Adrenal gland (tissue), 19 donors: ENCODE measurements at regions of chr2 and their contacts with region 1.

Region 1: GRCh38 chr2:66587216-66587615 is 152.3 kb downstream of the MEIS1 start:
- DNase-seq: peak in 1 of 7 donors; percentile 27
- H3K4me3 ChIP-seq: no peak overlapping the region
- H3K27ac ChIP-seq: peak overlapping the region in 1 of 5 donors; percentile 24
- H3K4me1 ChIP-seq: no peaks in the 10 kb centered on the region
- H3K27me3 ChIP-seq: no peaks in the 10 kb centered on the region
- CTCF ChIP-seq: no peak
- POLR2A ChIP-seq: no peak

Region 2: DNA sequence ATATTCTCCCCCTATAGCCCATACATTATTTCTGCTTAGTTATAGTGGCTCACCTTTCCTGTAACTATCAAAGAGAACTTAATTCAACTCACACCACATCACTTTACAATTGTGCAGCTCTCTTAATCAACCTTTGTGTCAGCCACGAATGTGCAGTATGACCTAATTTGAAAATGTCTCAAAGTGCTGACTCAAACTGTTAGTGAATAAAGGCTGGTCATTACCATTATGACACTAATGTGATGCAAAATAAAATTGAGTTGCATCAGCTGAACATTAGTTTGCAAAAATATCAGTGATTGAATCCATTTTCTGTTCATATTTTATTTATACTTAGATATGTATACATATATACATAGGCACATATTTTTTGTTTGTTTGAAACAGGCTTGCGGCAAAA is 99.5 kb after region 1 on chr2:
- intact Hi-C with region 1: loop called in 1 of 2 experiments (anchors 10 kb)
- DNase-seq: no peak
- H3K4me3 ChIP-seq: no peak overlapping the region
- H3K27ac ChIP-seq: peak overlapping the region in 3 of 5 donors; percentile 23 to 77 (median 70)
- H3K4me1 ChIP-seq: peaks cover 17 to 22% of the 10 kb centered on the region in 2 donors
- H3K27me3 ChIP-seq: no peaks in the 10 kb centered on the region
- CTCF ChIP-seq: no peak
- POLR2A ChIP-seq: no peak

Region 3: GRCh38 chr2:67476809-67477790 is 889.9 kb after region 1 on chr2:
- intact Hi-C with region 1: loop called in 1 of 2 experiments (anchors 10 kb)
- DNase-seq: peak in 4 of 7 donors; percentile 15 to 22 (median 17)
- H3K4me3 ChIP-seq: no peak overlapping the region
- H3K27ac ChIP-seq: no peak overlapping the region
- H3K4me1 ChIP-seq: peaks cover 0 to 12% of the 10 kb centered on the region in 2 donors
- H3K27me3 ChIP-seq: no peaks in the 10 kb centered on the region
- CTCF ChIP-seq: peak; percentile 25 to 67 (median 54)
- POLR2A ChIP-seq: no peak